Natural killer cell (primary cell): ENCODE measurements at regions of chr15 and their contacts with region 1.

Region 1: DNA sequence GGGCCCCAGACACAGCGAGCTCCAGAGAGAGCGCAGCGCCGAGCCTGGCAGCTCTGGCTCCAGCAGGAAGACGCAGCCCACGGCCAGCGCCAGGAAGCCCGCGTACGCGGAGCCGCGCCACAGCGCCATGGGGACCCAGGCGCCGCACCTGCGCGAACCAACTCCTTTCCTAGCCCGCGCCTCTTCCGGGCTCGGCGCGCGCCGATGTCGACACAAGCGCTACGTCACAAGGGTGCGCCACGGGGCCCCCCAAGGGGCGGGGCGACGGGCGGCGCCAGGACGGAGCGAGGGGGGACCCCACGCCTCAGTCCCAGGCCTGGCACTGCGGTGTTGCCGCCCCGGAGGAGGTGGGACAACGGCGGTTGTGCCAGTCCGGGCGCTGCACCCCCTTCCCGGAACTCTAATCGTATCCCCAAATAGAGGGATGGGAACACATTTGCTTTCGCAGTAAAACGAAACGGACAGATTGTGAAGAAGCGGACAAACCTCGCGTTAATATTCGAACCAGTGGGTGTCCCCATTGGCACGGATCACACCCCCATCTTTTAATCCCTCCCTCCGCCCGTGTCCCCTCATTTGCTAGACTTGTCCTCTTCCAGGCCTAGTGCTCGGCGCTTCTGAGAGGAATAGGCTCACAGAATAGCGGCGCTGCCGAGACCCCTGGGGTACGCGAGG is at the start of gene ADPGK:
- DNase-seq: peak; percentile 98 to 99
- ATAC-seq: peak; percentile 79 to 94 (median 82)
- H3K4me3 ChIP-seq: peak within 1 kb of the TSS; percentile 72
- H3K4me3 Mint-ChIP-seq: peak within 1 kb of the TSS; percentile 92
- H3K27ac ChIP-seq: peak within 1 kb of the TSS; percentile 92
- H3K27ac Mint-ChIP-seq: peak within 1 kb of the TSS; percentile 85 to 93
- H3K4me1 ChIP-seq: peaks cover 40% of the 10 kb centered on the region
- H3K4me1 Mint-ChIP-seq: peaks cover 59 to 75% of the 10 kb centered on the region in 2 donors
- H3K27me3 ChIP-seq: no peaks in the 10 kb centered on the region
- H3K27me3 Mint-ChIP-seq: no peaks in the 10 kb centered on the region
- CTCF ChIP-seq: no peak
- total RNA-seq, gene ADPGK: 99.8 to 113 (median 101) TPM

Region 2: GRCh38 chr15:72231066-72231846 is 552.4 kb before region 1 on chr15 and contains the start of gene PKM:
- intact Hi-C with region 1: loop called (anchors 10 kb)
- DNase-seq: peak; percentile 77 to 95
- ATAC-seq: peak; percentile 24 to 61 (median 58)
- H3K4me3 ChIP-seq: peak within 1 kb of the TSS; percentile 92
- H3K4me3 Mint-ChIP-seq: peak within 1 kb of the TSS; percentile 98
- H3K27ac ChIP-seq: peak within 1 kb of the TSS; percentile 80
- H3K27ac Mint-ChIP-seq: peak within 1 kb of the TSS; percentile 81 to 94
- H3K4me1 ChIP-seq: peaks cover 46% of the 10 kb centered on the region
- H3K4me1 Mint-ChIP-seq: peaks cover 39 to 52% of the 10 kb centered on the region in 2 donors
- H3K27me3 ChIP-seq: no peaks in the 10 kb centered on the region
- H3K27me3 Mint-ChIP-seq: no peaks in the 10 kb centered on the region
- CTCF ChIP-seq: no peak
- total RNA-seq, gene PKM: 121 to 180 (median 155) TPM

Region 3: DNA sequence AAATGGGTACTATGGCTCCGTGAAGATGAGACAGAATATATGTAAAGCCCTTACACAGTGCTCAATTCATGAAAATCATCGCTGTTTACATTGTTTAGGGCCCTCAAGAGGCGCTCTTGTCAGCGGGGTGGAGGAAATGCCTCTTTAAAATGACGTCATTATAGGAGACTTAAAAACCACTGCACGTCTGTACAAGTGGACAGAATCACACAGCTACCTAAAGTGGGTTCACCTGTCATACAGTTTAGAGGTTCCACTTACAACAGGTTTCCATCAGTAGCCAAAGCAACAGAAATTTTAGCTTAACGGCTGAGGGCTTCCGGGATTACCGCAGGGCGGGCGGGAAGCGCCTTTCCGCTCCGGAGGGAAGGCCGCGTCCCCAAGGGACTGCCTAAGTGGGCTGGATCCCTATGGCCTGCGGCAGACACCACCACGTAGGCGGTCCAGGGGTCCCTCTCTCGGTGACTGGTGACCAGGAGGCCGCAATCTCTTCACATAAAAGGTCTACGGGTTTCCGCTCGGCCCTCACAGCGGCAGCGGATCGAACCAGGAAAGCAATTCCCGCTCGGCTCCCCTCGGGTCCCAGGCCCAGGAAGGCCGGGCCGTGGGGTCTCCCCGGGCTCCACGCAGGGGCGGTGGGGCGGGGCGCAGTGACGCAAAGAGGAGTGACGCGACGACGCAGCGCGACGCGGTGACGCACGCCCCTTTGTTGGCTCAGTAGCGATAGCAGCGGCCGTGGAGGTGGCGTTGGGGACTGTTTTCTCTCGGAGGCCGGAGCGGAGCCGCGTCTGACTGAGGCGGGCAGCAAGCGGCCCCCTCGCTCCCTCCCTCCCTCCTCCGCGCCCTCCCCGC is 309.9 kb before region 1 on chr15 and contains the start of gene ARIH1:
- intact Hi-C with region 1: loop called (anchors 10 kb)
- DNase-seq: peak; percentile 98 to 99
- ATAC-seq: peak; percentile 76 to 92 (median 82)
- H3K4me3 ChIP-seq: peak within 1 kb of the TSS; percentile 88
- H3K4me3 Mint-ChIP-seq: peak within 1 kb of the TSS; percentile 92
- H3K27ac ChIP-seq: peak within 1 kb of the TSS; percentile 97
- H3K27ac Mint-ChIP-seq: peak within 1 kb of the TSS; percentile 89 to 92
- H3K4me1 ChIP-seq: peaks cover 24% of the 10 kb centered on the region
- H3K4me1 Mint-ChIP-seq: peaks cover 39% of the 10 kb centered on the region in 2 donors
- H3K27me3 ChIP-seq: no peaks in the 10 kb centered on the region
- H3K27me3 Mint-ChIP-seq: no peaks in the 10 kb centered on the region
- CTCF ChIP-seq: peak; percentile 18
- total RNA-seq, gene ARIH1: 193 to 212 (median 212) TPM

Region 4: DNA sequence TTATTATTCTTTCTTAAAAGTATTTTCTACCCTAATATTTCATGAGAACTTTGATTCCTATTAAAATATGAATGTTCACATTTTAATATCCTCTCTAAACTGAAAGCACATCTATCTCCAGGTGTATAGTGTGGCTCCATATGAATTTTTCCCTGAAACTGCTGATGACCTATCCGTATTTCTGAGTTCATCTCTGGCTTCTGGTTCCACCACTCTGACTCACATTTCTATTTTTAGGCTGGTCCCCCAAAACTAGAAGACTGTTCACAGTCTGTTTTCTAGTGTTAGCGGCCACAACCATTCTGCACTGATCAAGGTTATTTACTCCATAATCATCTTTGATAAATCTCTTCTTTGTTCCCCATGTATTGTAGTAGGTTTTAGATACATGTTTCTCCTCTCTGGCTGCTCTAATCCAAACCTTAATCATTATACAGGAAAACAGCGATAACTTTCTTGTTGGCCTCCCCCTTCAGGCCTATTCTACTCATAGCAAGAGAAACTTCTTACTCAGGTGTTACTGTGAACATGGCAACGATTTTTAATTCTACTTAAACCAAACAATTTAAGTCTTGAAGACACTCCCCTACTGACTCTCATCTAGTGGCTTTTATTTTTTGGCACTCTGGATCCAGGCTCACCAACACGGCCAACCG is 12.9 kb before region 1 on chr15:
- intact Hi-C with region 1: no loop called
- DNase-seq: no peak
- ATAC-seq: no peak
- H3K4me3 ChIP-seq: no peak overlapping the region
- H3K4me3 Mint-ChIP-seq: no peak overlapping the region
- H3K27ac ChIP-seq: no peak overlapping the region
- H3K27ac Mint-ChIP-seq: peak overlapping the region in 1 of 2 donors; percentile 4
- H3K4me1 ChIP-seq: peaks cover 9% of the 10 kb centered on the region
- H3K4me1 Mint-ChIP-seq: peaks cover 13 to 17% of the 10 kb centered on the region in 2 donors
- H3K27me3 ChIP-seq: no peaks in the 10 kb centered on the region
- H3K27me3 Mint-ChIP-seq: no peaks in the 10 kb centered on the region
- CTCF ChIP-seq: no peak

Region 5: DNA sequence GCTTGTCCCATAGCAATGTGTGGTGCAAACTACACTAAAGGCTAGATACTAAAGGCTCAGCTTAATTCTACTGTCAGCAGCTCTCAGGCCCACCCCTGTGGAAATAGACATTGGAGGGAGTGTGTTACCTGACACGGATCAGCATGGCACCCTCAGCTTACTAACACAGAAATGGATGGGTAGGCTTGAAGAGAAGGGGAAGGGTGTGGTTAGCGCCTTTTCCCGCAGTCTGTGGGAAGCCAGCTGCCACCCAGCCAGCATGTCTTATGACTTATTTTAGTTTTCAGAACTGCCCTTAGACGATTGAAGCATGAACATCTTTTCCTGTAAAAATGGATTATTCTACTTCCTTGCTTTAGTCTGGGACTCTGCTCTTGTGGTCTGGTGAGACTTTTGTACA is 25.6 kb after region 1 on chr15:
- intact Hi-C with region 1: loop called (anchors 2 kb)
- DNase-seq: peak; percentile 50 to 64
- ATAC-seq: peak; percentile 71 to 81 (median 72)
- H3K4me3 ChIP-seq: no peak overlapping the region
- H3K4me3 Mint-ChIP-seq: peak overlapping the region; percentile 81
- H3K27ac ChIP-seq: no peak overlapping the region
- H3K27ac Mint-ChIP-seq: peak overlapping the region; percentile 71
- H3K4me1 ChIP-seq: peaks cover 33% of the 10 kb centered on the region
- H3K4me1 Mint-ChIP-seq: peaks cover 33 to 42% of the 10 kb centered on the region in 2 donors
- H3K27me3 ChIP-seq: no peaks in the 10 kb centered on the region
- H3K27me3 Mint-ChIP-seq: peaks cover 0 to 14% of the 10 kb centered on the region in 2 donors
- CTCF ChIP-seq: no peak

Region 6: GRCh38 chr15:72845981-72846383 is 62.3 kb after region 1 on chr15:
- intact Hi-C with region 1: no loop called
- DNase-seq: no peak
- ATAC-seq: no peak
- H3K4me3 ChIP-seq: no peak overlapping the region
- H3K4me3 Mint-ChIP-seq: no peak overlapping the region
- H3K27ac ChIP-seq: no peak overlapping the region
- H3K27ac Mint-ChIP-seq: no peak overlapping the region
- H3K4me1 ChIP-seq: peaks cover 10% of the 10 kb centered on the region
- H3K4me1 Mint-ChIP-seq: peaks cover 11 to 14% of the 10 kb centered on the region in 2 donors
- H3K27me3 ChIP-seq: no peaks in the 10 kb centered on the region
- H3K27me3 Mint-ChIP-seq: peaks cover 31 to 56% of the 10 kb centered on the region in 2 donors
- CTCF ChIP-seq: no peak

Region 7: DNA sequence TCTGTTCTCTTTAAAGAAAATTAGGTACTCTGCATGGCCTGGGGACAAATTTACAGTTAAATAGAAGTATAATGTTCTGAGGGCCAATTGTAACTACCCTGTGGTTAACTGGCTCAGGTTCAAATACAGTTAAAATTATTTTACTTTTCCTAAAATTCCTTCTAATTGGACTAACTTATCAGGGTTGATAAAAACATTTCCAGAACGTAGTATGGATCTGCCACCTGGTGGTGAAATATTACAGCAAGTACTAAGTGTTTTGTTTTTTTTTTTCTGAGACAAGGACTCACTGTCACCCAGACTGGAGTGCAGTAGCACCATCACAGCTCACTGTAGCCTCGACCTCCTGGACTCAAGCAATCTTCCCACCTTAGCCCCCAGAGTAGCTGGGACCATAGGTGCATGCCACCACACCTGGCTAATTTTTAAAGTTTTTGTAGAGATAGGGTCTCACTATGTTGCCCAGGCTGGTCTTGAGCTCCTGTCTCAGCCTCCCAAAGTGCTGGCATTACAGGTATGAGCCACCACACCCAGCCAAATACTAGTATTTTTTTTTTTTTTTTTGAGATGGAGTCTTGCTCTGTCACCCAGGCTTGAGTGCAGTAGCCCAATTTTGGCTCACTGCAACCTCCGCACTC is 297.7 kb after region 1 on chr15:
- intact Hi-C with region 1: loop called (anchors 5 kb)
- DNase-seq: peak in 1 of 2 donors; percentile 73
- ATAC-seq: peak; percentile 54 to 65 (median 60)
- H3K4me3 ChIP-seq: no peak overlapping the region
- H3K4me3 Mint-ChIP-seq: no peak overlapping the region
- H3K27ac ChIP-seq: no peak overlapping the region
- H3K27ac Mint-ChIP-seq: no peak overlapping the region
- H3K4me1 ChIP-seq: no peaks in the 10 kb centered on the region
- H3K4me1 Mint-ChIP-seq: no peaks in the 10 kb centered on the region
- H3K27me3 ChIP-seq: peaks cover 3% of the 10 kb centered on the region
- H3K27me3 Mint-ChIP-seq: peaks cover 6 to 7% of the 10 kb centered on the region in 2 donors
- CTCF ChIP-seq: peak; percentile 79